BJ (cell line): ENCODE measurements at regions of chr16 and their contacts with region 1.

Region 1: DNA sequence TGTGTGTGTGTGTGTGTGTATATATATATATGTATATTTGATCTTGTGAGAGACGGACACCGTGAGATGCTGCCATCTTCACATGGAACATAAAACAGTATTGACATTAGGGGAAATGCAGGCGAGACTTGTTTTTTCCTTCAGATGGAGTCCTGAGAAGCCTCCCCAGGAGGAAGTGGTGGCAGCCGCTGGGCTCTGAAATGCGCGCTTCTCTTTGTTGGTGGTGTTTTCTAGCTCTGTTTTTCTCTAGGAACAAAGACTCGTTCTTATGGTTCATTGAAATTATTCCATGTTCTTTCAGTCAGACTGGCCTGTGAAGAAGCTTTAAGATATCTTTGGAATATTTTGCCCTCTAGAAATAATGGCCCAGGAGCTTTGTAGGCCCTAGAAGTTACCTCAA is 32.9 kb downstream of the SNX29 start:
- DNase-seq: no peak
- H3K4me3 ChIP-seq: no peak overlapping the region
- H3K27me3 ChIP-seq: no peaks in the 10 kb centered on the region
- CTCF ChIP-seq: no peak

Region 2: GRCh38 chr16:11982139-11982538 is 27.3 kb before region 1 on chr16:
- CTCF ChIA-PET with region 1: no interaction called
- POLR2A ChIA-PET with region 1: interaction called, 18 read pairs
- DNase-seq: no peak
- H3K4me3 ChIP-seq: no peak overlapping the region
- H3K27me3 ChIP-seq: no peaks in the 10 kb centered on the region
- CTCF ChIP-seq: no peak

Region 3: GRCh38 chr16:12803203-12804097 is 794.0 kb after region 1 on chr16 and contains the start of gene CPPED1:
- CTCF ChIA-PET with region 1: no interaction called
- POLR2A ChIA-PET with region 1: interaction called, 10 read pairs
- DNase-seq: peak; percentile 34
- H3K4me3 ChIP-seq: peak within 1 kb of the TSS; percentile 51
- H3K27me3 ChIP-seq: no peaks in the 10 kb centered on the region
- CTCF ChIP-seq: no peak
- polyA plus RNA-seq, gene CPPED1: 24.1 and 33.6 TPM in 2 replicates